ENCODE measurements at regions of chr7 and their contacts with region 1.

Region 1: DNA sequence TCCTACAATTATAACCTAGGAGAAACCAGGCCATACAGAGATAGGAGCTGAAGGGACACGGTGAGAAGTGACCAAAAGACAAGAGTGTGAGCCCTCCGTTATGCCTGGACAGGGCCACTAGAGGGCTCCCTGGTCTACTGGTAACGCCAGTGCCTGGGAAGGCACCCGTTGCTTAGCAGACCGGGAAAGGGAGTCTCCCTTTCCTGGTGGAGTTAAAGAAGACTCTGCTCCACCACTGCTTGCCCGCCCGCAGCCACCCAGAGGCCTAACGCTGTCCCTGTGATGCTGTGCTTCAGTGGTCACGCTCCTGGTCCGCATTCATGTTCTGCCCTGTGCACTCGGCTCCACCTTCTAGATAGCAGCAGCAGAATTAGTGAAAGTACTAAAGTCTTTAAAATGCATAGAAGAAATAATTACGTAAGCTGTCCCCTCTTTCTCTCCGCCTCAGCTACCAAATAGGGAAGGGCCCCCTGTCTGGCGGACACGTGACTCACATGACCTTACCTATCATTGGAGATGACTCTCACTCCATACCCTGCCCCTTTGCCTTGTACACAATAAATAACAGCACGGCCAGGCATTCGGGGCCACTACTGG is 34.8 kb downstream of the GRID2IP start:
- H3K4me3 Mint-ChIP-seq: peak overlapping the region; percentile 71
- H3K27ac Mint-ChIP-seq: peak overlapping the region; percentile 16
- H3K4me1 Mint-ChIP-seq: peaks cover 9% of the 10 kb centered on the region
- H3K27me3 Mint-ChIP-seq: peaks cover 7% of the 10 kb centered on the region

Region 2: DNA sequence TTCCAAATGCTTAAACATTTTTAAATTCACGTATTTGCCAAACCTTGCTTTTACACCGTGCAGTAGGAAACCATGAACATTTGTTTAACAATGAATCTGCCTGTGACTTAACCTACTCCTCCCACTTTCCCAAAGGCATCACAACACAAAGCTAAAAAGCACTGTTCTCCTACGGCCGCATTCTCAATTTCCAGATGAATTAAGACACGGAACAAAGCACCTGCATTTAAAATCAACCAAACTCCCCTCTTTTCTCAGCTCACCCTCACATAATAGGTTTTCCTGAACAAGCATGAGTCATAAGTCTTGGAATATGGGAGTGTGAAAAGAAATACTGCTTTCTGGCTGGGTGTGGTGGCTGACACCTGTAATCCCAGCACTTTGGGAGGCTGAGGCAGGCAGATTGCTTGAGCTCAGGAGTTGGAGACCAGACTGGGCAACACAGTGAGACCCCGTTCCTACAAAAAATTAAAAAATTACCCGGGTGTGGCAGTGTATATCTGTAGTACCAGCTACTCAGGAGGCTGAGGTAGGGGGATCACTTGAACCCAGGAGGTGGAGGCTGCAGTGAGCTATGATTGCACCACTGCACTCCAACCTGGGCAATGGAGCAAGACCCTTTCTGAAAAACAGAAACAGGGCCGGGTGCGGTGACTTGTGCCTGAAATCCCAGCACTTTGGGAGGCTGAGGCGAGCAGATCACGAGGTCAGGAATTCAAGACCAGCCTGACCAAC is 192.4 kb before region 1 on chr7:
- intact Hi-C with region 1: no loop called
- H3K4me3 Mint-ChIP-seq: no peak overlapping the region
- H3K27ac Mint-ChIP-seq: no peak overlapping the region
- H3K4me1 Mint-ChIP-seq: peaks cover 5% of the 10 kb centered on the region
- H3K27me3 Mint-ChIP-seq: no peaks in the 10 kb centered on the region

Region 3: DNA sequence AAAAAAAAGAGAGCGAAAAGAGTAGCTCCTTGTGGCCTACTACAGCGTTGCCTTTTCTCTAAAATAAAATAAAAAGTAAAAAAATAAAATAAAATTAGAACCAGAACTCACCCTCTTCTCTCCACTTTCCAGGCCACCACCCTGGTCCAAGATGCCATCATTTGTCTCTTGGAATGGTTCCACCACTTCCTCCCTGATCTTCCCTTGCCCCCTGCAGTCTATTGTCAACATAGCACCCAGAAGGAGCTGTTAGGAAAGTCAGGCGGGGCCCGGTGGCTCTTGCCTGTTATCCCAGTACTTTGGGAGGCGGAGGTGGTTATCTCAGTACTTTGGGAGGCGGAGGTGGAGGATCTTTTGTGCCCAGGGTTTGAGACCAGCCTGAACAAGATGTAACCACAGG is 42.4 kb after region 1 on chr7:
- intact Hi-C with region 1: loop called (anchors 1 kb)
- H3K4me3 Mint-ChIP-seq: no peak overlapping the region
- H3K27ac Mint-ChIP-seq: no peak overlapping the region
- H3K4me1 Mint-ChIP-seq: peaks cover 9% of the 10 kb centered on the region
- H3K27me3 Mint-ChIP-seq: peaks cover 5% of the 10 kb centered on the region